ENCODE measurements at regions of chr6 and their contacts with region 1.

Region 1: GRCh38 chr6:112043032-112044007 is 10.6 kb upstream of the CCN6 start:
- DNase-seq: peak; percentile 89 to 94 (median 90)
- H3K4me3 ChIP-seq: peak overlapping the region; percentile 89
- H3K4me3 Mint-ChIP-seq: peak overlapping the region; percentile 96 to 99 (median 97)
- H3K27ac ChIP-seq: peak overlapping the region; percentile 89
- H3K27ac Mint-ChIP-seq: peak overlapping the region; percentile 95 to 100 (median 99)
- H3K4me1 ChIP-seq: peaks cover 12% of the 10 kb centered on the region
- H3K4me1 Mint-ChIP-seq: peaks cover 9 to 20% (median 18%) of the 10 kb centered on the region in 3 donors
- H3K27me3 ChIP-seq: no peaks in the 10 kb centered on the region
- H3K27me3 Mint-ChIP-seq: no peaks in the 10 kb centered on the region

Region 2: DNA sequence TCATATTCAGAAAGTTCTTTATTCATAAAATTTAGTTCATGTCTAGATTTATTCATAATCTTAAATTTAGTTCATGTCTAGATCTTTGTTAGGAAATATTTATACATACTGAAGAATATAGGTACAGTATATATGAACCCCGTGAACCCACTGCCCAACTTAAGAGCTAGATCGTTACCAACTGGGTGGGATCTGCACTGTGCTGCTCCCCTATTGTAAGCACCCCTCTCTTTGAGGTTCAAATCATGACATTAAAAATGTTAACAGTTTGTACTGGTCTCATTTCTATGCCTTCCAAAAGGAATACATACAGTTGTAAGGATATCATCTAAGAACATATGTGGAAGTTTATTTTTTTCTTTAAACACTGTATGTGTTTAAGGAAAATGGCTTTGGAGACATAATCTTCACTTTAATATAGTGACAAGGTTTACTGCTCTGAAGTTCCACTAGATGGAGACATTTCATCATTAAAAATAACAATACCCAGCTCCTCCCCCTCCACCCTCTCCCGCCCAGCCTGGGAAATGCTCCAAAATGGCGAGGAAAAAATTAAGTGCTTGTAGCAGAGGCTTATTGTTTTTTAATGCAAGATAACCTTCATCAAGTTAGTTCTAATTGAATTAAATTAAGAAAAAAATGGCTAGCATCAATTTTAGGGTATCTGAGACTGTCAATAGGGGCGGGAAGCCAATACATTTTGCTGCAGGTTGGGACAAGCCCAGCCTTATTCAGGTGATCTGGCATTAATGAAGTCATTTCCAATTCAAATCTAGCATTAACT is 333.5 kb before region 1 on chr6:
- CTCF ChIA-PET with region 1: interaction called, 44 read pairs
- POLR2A ChIA-PET with region 1: interaction called, 9 read pairs
- DNase-seq: peak; percentile 27 to 76 (median 71)
- H3K4me3 ChIP-seq: no peak overlapping the region
- H3K4me3 Mint-ChIP-seq: peak overlapping the region in 6 of 7 donors; percentile 10 to 79 (median 55)
- H3K27ac ChIP-seq: no peak overlapping the region
- H3K27ac Mint-ChIP-seq: peak overlapping the region; percentile 64 to 99 (median 92)
- H3K4me1 ChIP-seq: peaks cover 55% of the 10 kb centered on the region
- H3K4me1 Mint-ChIP-seq: peaks cover 53 to 78% (median 55%) of the 10 kb centered on the region in 3 donors
- H3K27me3 ChIP-seq: no peaks in the 10 kb centered on the region
- H3K27me3 Mint-ChIP-seq: peaks cover 0 to 3% of the 10 kb centered on the region in 2 donors

Region 3: GRCh38 chr6:111997078-111997852 is 46.1 kb before region 1 on chr6:
- CTCF ChIA-PET with region 1: interaction called, 11 read pairs
- POLR2A ChIA-PET with region 1: interaction called, 4 read pairs
- DNase-seq: peak; percentile 72 to 85 (median 76)
- H3K4me3 ChIP-seq: peak overlapping the region; percentile 3
- H3K4me3 Mint-ChIP-seq: peak overlapping the region in 6 of 7 donors; percentile 62 to 80 (median 74)
- H3K27ac ChIP-seq: no peak overlapping the region
- H3K27ac Mint-ChIP-seq: peak overlapping the region in 7 of 8 donors; percentile 43 to 81 (median 67)
- H3K4me1 ChIP-seq: peaks cover 40% of the 10 kb centered on the region
- H3K4me1 Mint-ChIP-seq: peaks cover 36 to 43% (median 39%) of the 10 kb centered on the region in 3 donors
- H3K27me3 ChIP-seq: no peaks in the 10 kb centered on the region
- H3K27me3 Mint-ChIP-seq: peaks cover 0 to 2% of the 10 kb centered on the region in 2 donors

Region 4: GRCh38 chr6:112018619-112019416 is 24.5 kb before region 1 on chr6:
- CTCF ChIA-PET with region 1: interaction called, 53 read pairs
- POLR2A ChIA-PET with region 1: no interaction called
- DNase-seq: no peak
- H3K4me3 ChIP-seq: no peak overlapping the region
- H3K4me3 Mint-ChIP-seq: no peak overlapping the region
- H3K27ac ChIP-seq: no peak overlapping the region
- H3K27ac Mint-ChIP-seq: no peak overlapping the region
- H3K4me1 ChIP-seq: no peaks in the 10 kb centered on the region
- H3K4me1 Mint-ChIP-seq: peaks cover 9 to 30% (median 14%) of the 10 kb centered on the region in 3 donors
- H3K27me3 ChIP-seq: no peaks in the 10 kb centered on the region
- H3K27me3 Mint-ChIP-seq: peaks cover 0 to 6% of the 10 kb centered on the region in 2 donors

Region 5: GRCh38 chr6:112065426-112065986 is 22.2 kb after region 1 on chr6:
- CTCF ChIA-PET with region 1: no interaction called
- POLR2A ChIA-PET with region 1: no interaction called
- DNase-seq: no peak
- H3K4me3 ChIP-seq: no peak overlapping the region
- H3K4me3 Mint-ChIP-seq: no peak overlapping the region
- H3K27ac ChIP-seq: no peak overlapping the region
- H3K27ac Mint-ChIP-seq: no peak overlapping the region
- H3K4me1 ChIP-seq: no peaks in the 10 kb centered on the region
- H3K4me1 Mint-ChIP-seq: no peaks in the 10 kb centered on the region
- H3K27me3 ChIP-seq: no peaks in the 10 kb centered on the region
- H3K27me3 Mint-ChIP-seq: no peaks in the 10 kb centered on the region

Measured in CD8-positive, alpha-beta memory T cell (primary cell).